ENCODE measurements at regions of chr9 and their contacts with region 1.

Region 1: GRCh38 chr9:99069075-99069474 is 35.8 kb upstream of the TGFBR1 start:
- DNase-seq: no peak
- H3K4me3 ChIP-seq: no peak overlapping the region
- H3K4me3 Mint-ChIP-seq: no peak overlapping the region
- H3K27ac ChIP-seq: no peak overlapping the region
- H3K27ac Mint-ChIP-seq: peak overlapping the region in 1 of 7 donors; percentile 43
- H3K4me1 ChIP-seq: no peaks in the 10 kb centered on the region
- H3K4me1 Mint-ChIP-seq: peaks cover 14% of the 10 kb centered on the region
- H3K27me3 ChIP-seq: no peaks in the 10 kb centered on the region
- H3K27me3 Mint-ChIP-seq: peaks cover 0 to 3% (median 2%) of the 10 kb centered on the region in 3 donors
- CTCF ChIP-seq: no peak

Region 2: GRCh38 chr9:99030092-99030511 is 39.0 kb before region 1 on chr9:
- intact Hi-C with region 1: loop called in 1 of 2 experiments (anchors 5 kb)
- DNase-seq: peak in 1 of 3 donors; percentile 25
- H3K4me3 ChIP-seq: no peak overlapping the region
- H3K4me3 Mint-ChIP-seq: peak overlapping the region in 1 of 2 donors; percentile 63
- H3K27ac ChIP-seq: no peak overlapping the region
- H3K27ac Mint-ChIP-seq: peak overlapping the region in 2 of 7 donors; percentile 48 to 61
- H3K4me1 ChIP-seq: peaks cover 33 to 34% of the 10 kb centered on the region in 2 donors
- H3K4me1 Mint-ChIP-seq: peaks cover 44% of the 10 kb centered on the region
- H3K27me3 ChIP-seq: peaks cover 3 to 8% of the 10 kb centered on the region in 2 donors
- H3K27me3 Mint-ChIP-seq: peaks cover 17 to 29% (median 28%) of the 10 kb centered on the region in 3 donors
- CTCF ChIP-seq: no peak

Measured in CD14-positive monocyte (primary cell).